B cell (primary cell): ENCODE measurements at regions of chr1 and their contacts with region 1.

Region 1: GRCh38 chr1:11681071-11681771 is at the start of gene MAD2L2:
- DNase-seq: peak; percentile 92
- ATAC-seq: peak; percentile 94
- H3K4me3 ChIP-seq: peak within 1 kb of the TSS; percentile 46 to 96 (median 89)
- H3K4me3 Mint-ChIP-seq: peak within 1 kb of the TSS; percentile 92
- H3K27ac ChIP-seq: peak within 1 kb of the TSS; percentile 51 to 77
- H3K27ac Mint-ChIP-seq: peak within 1 kb of the TSS; percentile 94
- H3K4me1 ChIP-seq: peaks cover 11 to 20% of the 10 kb centered on the region in 2 donors
- H3K4me1 Mint-ChIP-seq: peaks cover 20% of the 10 kb centered on the region
- H3K27me3 ChIP-seq: peaks cover 0 to 4% (median 0%) of the 10 kb centered on the region in 4 experiments
- H3K27me3 Mint-ChIP-seq: no peaks in the 10 kb centered on the region
- CTCF ChIP-seq: no peak
- total RNA-seq, gene MAD2L2: 27.7 and 29.0 TPM in 2 replicates

Region 2: DNA sequence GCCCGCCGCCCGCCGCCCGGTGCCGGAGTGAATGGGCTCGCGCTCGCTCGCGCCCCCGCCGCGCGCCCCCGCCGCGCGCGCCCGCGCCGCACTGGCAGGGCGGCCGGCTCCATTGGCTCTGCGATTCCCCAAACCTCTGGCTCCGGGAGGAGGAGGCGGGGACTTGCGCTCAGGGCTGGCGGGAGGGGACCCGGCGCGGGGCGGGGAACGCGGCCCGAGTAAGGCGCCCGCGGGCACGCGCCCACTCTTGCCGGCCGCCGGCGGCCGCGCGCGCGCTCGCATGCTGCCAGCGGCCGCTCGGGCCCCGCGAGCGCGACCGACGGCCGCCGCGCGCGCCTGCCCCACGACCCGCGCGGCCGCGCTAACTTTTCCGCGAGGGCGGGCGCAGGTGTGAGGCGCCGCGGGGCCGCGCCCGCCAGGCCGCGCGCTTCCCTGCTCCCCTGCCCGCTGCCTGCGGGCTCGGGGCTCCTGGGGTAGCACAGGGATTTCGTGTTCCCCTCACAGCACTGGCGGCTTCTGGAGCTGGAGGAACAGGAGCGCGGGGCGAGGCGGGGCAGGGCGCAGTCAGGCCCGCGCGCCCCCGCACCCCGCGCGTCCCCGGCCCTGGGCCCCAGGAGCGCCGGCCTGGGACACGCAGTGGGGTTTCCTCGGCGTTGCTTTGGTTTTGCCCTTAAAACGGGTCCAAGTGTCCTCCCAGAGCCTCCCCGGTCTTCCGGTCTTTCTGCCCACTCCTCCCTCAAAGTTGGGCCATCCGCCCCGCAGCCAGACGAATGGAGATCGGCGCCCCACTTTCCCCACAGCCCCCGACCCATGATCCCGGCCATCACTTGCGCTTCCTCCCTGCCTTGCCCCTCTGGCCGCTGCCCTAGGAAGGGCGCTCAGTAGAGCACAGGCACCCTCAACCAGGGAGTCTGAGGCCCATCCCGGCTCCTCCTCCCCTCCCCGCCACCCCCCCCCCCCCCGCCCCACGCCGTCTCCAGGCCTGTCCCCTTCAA is 986.3 kb before region 1 on chr1:
- CTCF ChIA-PET with region 1: no interaction called
- POLR2A ChIA-PET with region 1: no interaction called
- intact Hi-C with region 1: loop called (anchors 10 kb)
- DNase-seq: peak; percentile 92
- ATAC-seq: peak; percentile 73
- H3K4me3 ChIP-seq: peak overlapping the region in 4 of 5 experiments; percentile 24 to 63 (median 50)
- H3K4me3 Mint-ChIP-seq: peak overlapping the region; percentile 87
- H3K27ac ChIP-seq: peak overlapping the region in 1 of 2 donors; percentile 68
- H3K27ac Mint-ChIP-seq: peak overlapping the region; percentile 85
- H3K4me1 ChIP-seq: peaks cover 16 to 24% of the 10 kb centered on the region in 2 donors
- H3K4me1 Mint-ChIP-seq: peaks cover 19% of the 10 kb centered on the region
- H3K27me3 ChIP-seq: no peaks in the 10 kb centered on the region
- H3K27me3 Mint-ChIP-seq: peaks cover 8% of the 10 kb centered on the region
- CTCF ChIP-seq: no peak

Region 3: DNA sequence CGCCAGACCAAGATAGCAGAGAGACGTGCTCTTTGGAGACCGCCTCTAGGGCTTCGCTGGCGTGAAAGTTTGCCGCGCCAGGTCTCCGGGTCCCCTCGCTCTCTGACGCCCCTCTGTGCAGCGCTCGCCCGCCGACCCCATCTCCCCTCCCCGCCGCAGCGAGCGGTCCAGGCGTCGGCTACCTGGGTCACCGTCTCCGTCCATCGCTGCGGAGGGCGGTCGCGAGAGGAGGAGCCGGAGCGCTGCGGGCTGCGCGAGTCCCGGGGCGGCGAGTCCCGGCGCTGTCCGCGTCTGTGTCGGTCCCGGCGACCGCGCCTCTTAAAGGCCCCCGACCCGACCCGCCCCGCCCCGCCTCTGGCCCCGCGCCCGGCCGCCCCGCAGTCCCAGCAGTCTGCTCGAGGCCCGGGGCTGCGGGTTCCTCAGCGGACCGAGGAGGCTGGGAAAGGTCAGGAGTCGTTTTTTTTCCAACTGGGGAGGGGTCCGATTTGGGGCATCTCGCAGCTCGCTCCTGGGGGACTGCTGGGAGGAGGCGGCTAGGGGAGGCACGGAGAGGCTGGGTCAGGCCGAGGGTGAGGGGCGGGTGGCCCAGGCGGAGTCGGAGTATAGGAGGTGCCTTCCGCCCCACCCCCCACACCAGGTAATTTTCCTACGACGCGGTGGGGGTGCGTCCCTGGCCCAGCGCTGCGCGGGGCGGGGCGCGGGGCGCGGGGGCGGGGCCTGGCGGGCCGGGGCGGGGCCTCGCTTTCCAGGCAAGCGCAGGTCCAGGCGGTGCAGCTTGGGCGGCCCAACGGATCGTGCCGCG is 26.9 kb before region 1 on chr1 and contains the starts of genes FBXO2 and FBXO44:
- CTCF ChIA-PET with region 1: interaction called, 7 read pairs
- POLR2A ChIA-PET with region 1: interaction called, 3 read pairs
- intact Hi-C with region 1: loop called (anchors 1 kb)
- DNase-seq: peak; percentile 77
- ATAC-seq: peak; percentile 86
- H3K4me3 ChIP-seq: peak within 1 kb of the TSS in 4 of 5 experiments; percentile 69 to 82 (median 74)
- H3K4me3 Mint-ChIP-seq: peak within 1 kb of the TSS; percentile 84
- H3K27ac ChIP-seq: peak within 1 kb of the TSS in 1 of 2 donors; percentile 25
- H3K27ac Mint-ChIP-seq: peak within 1 kb of the TSS; percentile 50
- H3K4me1 ChIP-seq: peaks cover 22 to 35% of the 10 kb centered on the region in 2 donors
- H3K4me1 Mint-ChIP-seq: peaks cover 28% of the 10 kb centered on the region
- H3K27me3 ChIP-seq: no peaks in the 10 kb centered on the region
- H3K27me3 Mint-ChIP-seq: no peaks in the 10 kb centered on the region
- CTCF ChIP-seq: no peak
- total RNA-seq, gene FBXO2: 9.6 and 10.7 TPM in 2 replicates
- total RNA-seq, gene FBXO44: 58.6 and 61.5 TPM in 2 replicates

Region 4: DNA sequence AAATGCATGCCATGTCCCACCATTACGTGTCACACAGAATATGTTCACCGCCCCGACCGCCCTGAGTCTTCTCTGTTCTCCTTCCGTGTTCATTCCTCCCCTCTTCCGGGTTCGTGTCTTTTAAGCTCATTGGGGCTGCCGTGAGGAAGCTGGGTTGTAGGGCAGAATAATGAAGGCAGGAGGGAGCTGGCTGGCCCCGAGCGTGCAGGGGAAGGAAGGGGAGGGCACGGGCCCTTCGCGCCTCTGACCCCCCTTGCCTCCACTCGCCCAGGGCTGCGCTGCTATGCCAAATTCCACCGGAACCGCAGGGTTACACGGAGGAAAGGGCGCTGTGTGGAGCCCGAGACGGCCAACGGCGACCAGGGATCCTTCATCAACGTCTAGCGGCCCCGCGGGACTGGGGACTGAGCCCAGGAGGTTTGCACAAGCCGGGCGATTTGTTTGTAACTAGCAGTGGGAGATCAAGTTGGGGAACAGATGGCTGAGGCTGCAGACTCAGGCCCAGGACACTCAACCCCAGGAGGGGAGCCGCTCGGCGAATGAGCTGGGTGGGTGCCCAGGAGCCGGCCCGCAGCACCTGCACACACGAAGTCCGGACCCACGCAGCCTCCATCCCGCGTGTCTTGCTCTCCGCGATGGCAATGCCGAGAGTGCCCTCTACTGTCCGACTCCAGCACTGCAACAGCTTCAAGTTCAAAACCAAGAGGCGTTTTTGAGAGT is 38.3 kb after region 1 on chr1:
- CTCF ChIA-PET with region 1: interaction called, 18 read pairs
- POLR2A ChIA-PET with region 1: interaction called, 9 read pairs
- intact Hi-C with region 1: loop called (anchors 1 kb)
- DNase-seq: peak; percentile 91
- ATAC-seq: peak; percentile 88
- H3K4me3 ChIP-seq: peak overlapping the region in 4 of 5 experiments; percentile 43 to 67 (median 63)
- H3K4me3 Mint-ChIP-seq: peak overlapping the region; percentile 72
- H3K27ac ChIP-seq: peak overlapping the region; percentile 54 to 73
- H3K27ac Mint-ChIP-seq: peak overlapping the region; percentile 96
- H3K4me1 ChIP-seq: peaks cover 8 to 13% of the 10 kb centered on the region in 2 donors
- H3K4me1 Mint-ChIP-seq: peaks cover 13% of the 10 kb centered on the region
- H3K27me3 ChIP-seq: no peaks in the 10 kb centered on the region
- H3K27me3 Mint-ChIP-seq: no peaks in the 10 kb centered on the region
- CTCF ChIP-seq: peak; percentile 95

Region 5: DNA sequence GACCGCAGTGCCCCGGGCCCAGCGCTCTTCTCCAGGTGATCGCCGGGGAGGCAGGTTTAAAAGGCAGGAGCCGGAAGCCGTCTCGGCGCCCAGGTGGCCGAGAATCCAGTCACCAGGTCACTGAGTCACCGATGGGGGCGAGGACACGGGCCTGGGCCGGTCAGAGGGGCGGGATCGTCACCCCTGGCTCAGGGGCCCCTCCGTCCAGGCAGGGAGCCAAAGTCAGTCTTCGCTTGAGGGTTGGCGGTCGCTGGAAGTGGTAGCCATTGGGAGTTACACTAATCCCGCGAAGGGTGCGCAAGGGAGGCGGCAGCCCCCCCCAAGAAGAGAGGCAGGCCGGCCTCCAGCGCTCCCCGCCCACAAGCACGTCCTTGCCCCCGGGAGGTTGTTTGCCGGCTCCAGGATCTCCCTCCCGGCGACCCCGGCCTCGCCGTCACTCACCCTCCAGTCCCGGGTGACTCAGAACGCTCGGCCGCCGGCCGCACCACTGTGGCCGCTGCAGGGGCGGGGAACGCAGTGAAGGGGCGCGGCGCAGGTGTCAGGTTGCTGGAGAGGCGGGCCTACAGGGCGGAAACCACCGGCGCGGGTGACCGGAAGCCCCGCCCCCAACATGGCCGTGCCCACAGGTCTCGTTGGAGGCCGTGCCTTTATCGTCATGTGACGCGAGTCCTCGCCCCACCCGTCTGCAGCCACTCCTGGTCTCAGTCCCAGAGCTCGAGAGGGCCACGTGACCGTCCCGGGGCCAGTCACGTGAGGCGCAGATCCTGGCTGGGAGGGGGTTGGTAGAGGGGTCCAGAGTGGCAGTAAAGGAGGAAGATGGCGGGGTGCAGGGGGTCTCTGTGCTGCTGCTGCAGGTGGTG is 124.5 kb after region 1 on chr1 and contains the starts of genes CLCN6 and MTHFR:
- CTCF ChIA-PET with region 1: no interaction called
- POLR2A ChIA-PET with region 1: no interaction called
- intact Hi-C with region 1: loop called (anchors 5 kb)
- DNase-seq: peak; percentile 99
- ATAC-seq: peak; percentile 81
- H3K4me3 ChIP-seq: peak within 1 kb of the TSS; percentile 80 to 95 (median 80)
- H3K4me3 Mint-ChIP-seq: peak within 1 kb of the TSS; percentile 99
- H3K27ac ChIP-seq: peak within 1 kb of the TSS; percentile 95 to 99
- H3K27ac Mint-ChIP-seq: peak within 1 kb of the TSS; percentile 99
- H3K4me1 ChIP-seq: peaks cover 63 to 66% of the 10 kb centered on the region in 2 donors
- H3K4me1 Mint-ChIP-seq: peaks cover 73% of the 10 kb centered on the region
- H3K27me3 ChIP-seq: no peaks in the 10 kb centered on the region
- H3K27me3 Mint-ChIP-seq: no peaks in the 10 kb centered on the region
- CTCF ChIP-seq: no peak
- total RNA-seq, gene CLCN6: 99.8 and 105 TPM in 2 replicates
- total RNA-seq, gene MTHFR: 109 and 114 TPM in 2 replicates

Region 6: DNA sequence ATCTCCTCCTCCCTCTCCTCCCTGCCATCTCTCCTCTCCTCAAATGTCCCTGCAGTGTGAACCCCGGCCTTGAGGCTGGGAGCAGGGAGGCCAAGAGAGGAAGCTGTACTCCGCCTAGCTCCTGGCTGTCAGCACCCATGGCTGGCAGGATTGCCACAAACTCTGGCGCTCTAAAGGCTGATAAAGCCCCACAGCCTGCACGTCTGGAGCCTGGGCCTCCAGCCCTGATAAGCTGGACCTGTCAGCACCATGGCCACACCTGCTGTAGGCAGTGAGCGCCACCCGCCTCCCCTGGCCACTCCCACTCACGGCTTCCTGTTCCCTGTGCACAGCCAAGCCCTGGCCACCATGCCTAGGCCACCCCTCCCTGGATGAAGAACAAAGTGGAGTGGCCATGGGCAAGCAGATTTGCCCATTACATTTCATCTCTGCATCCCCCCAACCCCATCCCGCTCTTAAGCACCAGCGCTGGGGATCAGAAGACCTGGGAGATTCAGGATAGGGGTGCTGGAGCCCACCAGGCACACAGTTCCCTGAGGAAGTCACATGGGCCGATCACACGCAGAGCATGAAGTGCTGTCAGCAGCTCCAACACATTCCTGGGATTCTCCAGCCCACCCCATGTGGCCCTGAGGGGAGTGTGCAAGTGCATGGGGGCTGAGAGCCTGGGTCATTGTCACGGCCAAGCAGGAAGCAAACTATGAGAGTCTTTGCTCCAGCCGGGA is 201.8 kb after region 1 on chr1:
- CTCF ChIA-PET with region 1: no interaction called
- POLR2A ChIA-PET with region 1: no interaction called
- intact Hi-C with region 1: no loop called
- DNase-seq: no peak
- ATAC-seq: no peak
- H3K4me3 ChIP-seq: no peak overlapping the region
- H3K4me3 Mint-ChIP-seq: no peak overlapping the region
- H3K27ac ChIP-seq: no peak overlapping the region
- H3K27ac Mint-ChIP-seq: no peak overlapping the region
- H3K4me1 ChIP-seq: no peaks in the 10 kb centered on the region
- H3K4me1 Mint-ChIP-seq: no peaks in the 10 kb centered on the region
- H3K27me3 ChIP-seq: peaks cover 0 to 8% (median 0%) of the 10 kb centered on the region in 4 experiments
- H3K27me3 Mint-ChIP-seq: peaks cover 7% of the 10 kb centered on the region
- CTCF ChIP-seq: no peak